Mucosa of descending colon (tissue), 3 donors: ENCODE measurements at regions of chr15 and their contacts with region 1.

Region 1: GRCh38 chr15:95025924-95026728 is 794.8 kb downstream of the MCTP2 start:
- DNase-seq: peak in 1 of 3 donors; percentile 40
- ATAC-seq: no peak
- H3K4me3 ChIP-seq: no peak overlapping the region
- H3K4me1 ChIP-seq: no peaks in the 10 kb centered on the region
- CTCF ChIP-seq: no peak

Region 2: GRCh38 chr15:94894056-94894455 is 132.1 kb before region 1 on chr15:
- intact Hi-C with region 1: no loop called
- DNase-seq: no peak
- ATAC-seq: no peak
- H3K4me3 ChIP-seq: no peak overlapping the region
- H3K4me1 ChIP-seq: no peaks in the 10 kb centered on the region
- CTCF ChIP-seq: no peak

Region 3: GRCh38 chr15:96670389-96670788 is 1644.3 kb after region 1 on chr15:
- intact Hi-C with region 1: loop called in 1 of 2 experiments (anchors 10 kb)
- DNase-seq: no peak
- ATAC-seq: no peak
- H3K4me3 ChIP-seq: no peak overlapping the region
- H3K4me1 ChIP-seq: no peaks in the 10 kb centered on the region
- CTCF ChIP-seq: no peak